ENCODE measurements at regions of chr3 and their contacts with region 1.

Region 1: GRCh38 chr3:124761250-124761796 is 31.1 kb downstream of the UMPS start:
- DNase-seq: peak; percentile 83
- H3K4me3 Mint-ChIP-seq: peak overlapping the region; percentile 28
- H3K27ac Mint-ChIP-seq: no peak overlapping the region
- H3K4me1 Mint-ChIP-seq: peaks cover 3% of the 10 kb centered on the region
- H3K27me3 Mint-ChIP-seq: no peaks in the 10 kb centered on the region

Region 2: GRCh38 chr3:124741027-124741426 is 20.3 kb before region 1 on chr3:
- CTCF ChIA-PET with region 1: interaction called, 23 read pairs
- POLR2A ChIA-PET with region 1: no interaction called
- intact Hi-C with region 1: no loop called
- DNase-seq: no peak
- H3K4me3 Mint-ChIP-seq: no peak overlapping the region
- H3K27ac Mint-ChIP-seq: no peak overlapping the region
- H3K4me1 Mint-ChIP-seq: peaks cover 10% of the 10 kb centered on the region
- H3K27me3 Mint-ChIP-seq: no peaks in the 10 kb centered on the region

Region 3: GRCh38 chr3:124780761-124781475 is 19.6 kb after region 1 on chr3:
- CTCF ChIA-PET with region 1: interaction called, 31 read pairs
- POLR2A ChIA-PET with region 1: no interaction called
- intact Hi-C with region 1: no loop called
- DNase-seq: no peak
- H3K4me3 Mint-ChIP-seq: no peak overlapping the region
- H3K27ac Mint-ChIP-seq: no peak overlapping the region
- H3K4me1 Mint-ChIP-seq: peaks cover 8% of the 10 kb centered on the region
- H3K27me3 Mint-ChIP-seq: peaks cover 6% of the 10 kb centered on the region

Region 4: DNA sequence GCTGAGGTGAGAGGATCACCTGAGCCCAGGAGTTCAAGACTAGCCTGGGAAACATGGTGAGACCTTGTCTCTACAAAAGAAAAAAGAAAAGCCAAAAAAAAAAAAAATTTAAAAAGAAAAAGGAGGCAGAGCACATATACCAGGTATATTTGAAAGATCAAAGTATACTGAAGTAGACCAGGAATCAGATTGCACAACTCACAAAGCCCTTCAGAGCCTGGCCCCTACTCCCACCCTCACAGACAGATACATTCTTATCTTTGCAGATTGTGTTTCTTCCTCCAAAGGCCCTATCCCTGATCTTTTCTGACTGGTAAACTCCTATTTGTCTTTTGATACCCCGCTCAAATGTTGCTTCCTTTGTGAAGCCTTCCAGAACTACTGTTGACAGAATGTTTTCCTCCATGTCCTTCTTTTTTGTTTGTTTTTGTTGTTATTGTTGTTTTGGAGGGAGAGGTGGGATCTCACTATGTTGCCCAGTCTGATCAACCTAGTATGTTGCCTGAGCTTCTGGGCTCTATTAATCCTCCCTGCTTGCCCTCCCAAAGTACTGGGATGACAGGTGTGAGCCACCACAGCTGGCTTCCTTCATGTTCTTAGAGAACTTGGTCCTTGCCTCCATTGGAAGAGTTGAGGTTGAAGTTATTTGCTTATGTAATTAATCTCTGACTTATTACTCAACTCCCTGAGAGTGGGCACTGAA is 135.7 kb after region 1 on chr3:
- CTCF ChIA-PET with region 1: interaction called, 285 read pairs
- POLR2A ChIA-PET with region 1: no interaction called
- intact Hi-C with region 1: loop called (anchors 1 kb)
- DNase-seq: no peak
- H3K4me3 Mint-ChIP-seq: no peak overlapping the region
- H3K27ac Mint-ChIP-seq: no peak overlapping the region
- H3K4me1 Mint-ChIP-seq: peaks cover 3% of the 10 kb centered on the region
- H3K27me3 Mint-ChIP-seq: peaks cover 4% of the 10 kb centered on the region

Region 5: DNA sequence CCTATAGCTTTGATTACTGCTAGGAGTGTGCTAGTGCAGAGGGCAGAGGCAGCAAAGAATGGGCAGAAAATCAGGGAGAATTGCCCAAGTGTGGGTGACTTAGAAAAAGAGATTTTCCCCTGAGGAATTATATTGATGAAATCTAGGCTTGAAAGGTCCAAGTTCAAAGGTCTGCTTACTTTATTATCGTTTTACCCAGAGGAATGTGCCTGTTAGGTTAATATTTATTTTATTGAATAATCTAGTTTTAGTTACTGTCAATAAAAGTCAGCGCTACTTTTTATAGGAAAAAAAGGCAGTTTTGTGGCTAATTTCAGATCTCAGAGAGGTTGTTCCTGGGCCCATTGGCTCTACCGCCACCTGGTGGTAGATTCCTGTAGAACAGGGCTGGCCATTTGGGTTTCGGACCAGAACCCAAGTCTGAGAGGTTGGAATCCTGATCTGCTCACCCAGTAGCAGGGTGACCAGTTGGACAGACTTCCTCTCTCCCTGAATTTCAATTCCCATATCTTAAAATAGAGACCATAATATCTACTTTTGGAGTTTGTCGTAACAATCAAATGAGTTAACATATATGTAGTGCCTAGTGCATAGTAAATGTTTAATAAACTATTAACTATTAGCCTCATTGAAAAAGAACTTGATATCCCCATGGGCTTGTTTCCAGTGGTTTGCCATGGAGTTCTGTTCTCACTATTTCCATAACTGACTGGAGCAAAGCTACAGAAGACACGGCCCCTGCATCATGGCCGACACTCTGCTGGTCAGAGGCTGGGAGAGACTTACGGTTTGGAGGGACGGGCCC is 676.5 kb after region 1 on chr3:
- CTCF ChIA-PET with region 1: interaction called, 6 read pairs
- POLR2A ChIA-PET with region 1: no interaction called
- intact Hi-C with region 1: loop called (anchors 5 kb)
- DNase-seq: peak; percentile 69
- H3K4me3 Mint-ChIP-seq: no peak overlapping the region
- H3K27ac Mint-ChIP-seq: no peak overlapping the region
- H3K4me1 Mint-ChIP-seq: peaks cover 10% of the 10 kb centered on the region
- H3K27me3 Mint-ChIP-seq: no peaks in the 10 kb centered on the region

Measured in activated CD4-positive, alpha-beta memory T cell treated with anti-CD3 and anti-CD28 coated beads for 36 hours (primary cell).